ENCODE measurements at regions of chr3 and their contacts with region 1.

Region 1: GRCh38 chr3:32143849-32144757 is 37.7 kb downstream of the GPD1L start:
- DNase-seq: peak; percentile 41
- H3K4me3 ChIP-seq: no peak overlapping the region
- H3K27ac ChIP-seq: no peak overlapping the region
- H3K4me1 ChIP-seq: peaks cover 4% of the 10 kb centered on the region
- H3K27me3 ChIP-seq: no peaks in the 10 kb centered on the region
- CTCF ChIP-seq: peak; percentile 69 to 79 (median 70)

Region 2: DNA sequence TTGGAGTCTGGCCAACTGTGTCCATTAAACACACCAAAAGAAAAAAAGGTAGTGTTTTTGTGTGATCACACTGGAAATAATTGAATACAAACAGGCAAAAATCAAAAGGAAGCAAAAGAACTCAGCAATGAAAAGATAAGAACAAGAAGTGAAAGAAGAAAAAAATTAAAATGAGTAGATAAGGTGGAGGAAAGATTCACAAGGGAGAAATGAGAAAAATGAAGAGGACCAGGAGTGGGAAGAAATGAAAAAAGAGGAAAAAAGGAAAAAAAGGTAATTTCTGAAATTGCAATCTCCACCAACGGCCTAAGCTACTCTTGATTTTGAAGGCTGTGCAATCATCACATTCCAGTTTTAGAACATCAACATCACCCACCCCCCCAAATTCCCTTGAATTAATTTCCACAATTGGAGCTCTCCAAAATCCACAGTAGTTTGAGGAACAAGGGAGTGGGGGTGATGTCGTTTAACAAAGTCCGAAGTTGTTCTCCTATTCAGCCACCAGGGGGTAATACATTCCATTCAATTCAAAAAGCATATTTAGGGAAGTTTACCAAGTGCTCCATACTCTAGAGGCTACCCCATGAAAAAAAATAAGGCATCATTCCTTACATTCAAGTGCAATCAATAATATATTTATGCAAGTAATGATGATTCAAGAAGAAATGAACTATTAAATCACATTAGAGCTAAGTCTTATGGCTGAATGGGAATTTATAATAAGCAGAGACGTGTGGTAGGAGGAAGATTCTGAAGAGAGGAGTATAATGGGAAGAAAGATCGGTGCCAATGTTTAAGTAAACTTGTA is 125.1 kb before region 1 on chr3:
- dilution Hi-C with region 1: loop called (anchors 25 kb)
- DNase-seq: no peak
- H3K4me3 ChIP-seq: no peak overlapping the region
- H3K27ac ChIP-seq: no peak overlapping the region
- H3K4me1 ChIP-seq: no peaks in the 10 kb centered on the region
- H3K27me3 ChIP-seq: no peaks in the 10 kb centered on the region
- CTCF ChIP-seq: peak; percentile 58 to 67 (median 61)

Measured in keratinocyte (primary cell).